Naive thymus-derived CD4-positive, alpha-beta T cell (primary cell): ENCODE measurements at regions of chr1 and their contacts with region 1.

Region 1: GRCh38 chr1:198007687-198008607 is 90.8 kb downstream of the LHX9 start:
- DNase-seq: no peak
- ATAC-seq: no peak
- H3K4me3 ChIP-seq: no peak overlapping the region
- H3K4me3 Mint-ChIP-seq: no peak overlapping the region
- H3K27ac ChIP-seq: no peak overlapping the region
- H3K27ac Mint-ChIP-seq: no peak overlapping the region
- H3K4me1 ChIP-seq: no peaks in the 10 kb centered on the region
- H3K4me1 Mint-ChIP-seq: no peaks in the 10 kb centered on the region
- H3K27me3 ChIP-seq: no peaks in the 10 kb centered on the region
- H3K27me3 Mint-ChIP-seq: peaks cover 0 to 19% (median 3%) of the 10 kb centered on the region in 5 donors

Region 2: GRCh38 chr1:198047913-198048312 is 40.0 kb after region 1 on chr1:
- CTCF ChIA-PET with region 1: no interaction called
- POLR2A ChIA-PET with region 1: no interaction called
- intact Hi-C with region 1: loop called in 1 of 2 experiments (anchors 1 kb)
- DNase-seq: peak in 5 of 9 donors; percentile 4 to 35 (median 10)
- ATAC-seq: peak; percentile 54
- H3K4me3 ChIP-seq: no peak overlapping the region
- H3K4me3 Mint-ChIP-seq: peak overlapping the region in 3 of 10 donors; percentile 1 to 51 (median 9)
- H3K27ac ChIP-seq: no peak overlapping the region
- H3K27ac Mint-ChIP-seq: peak overlapping the region in 3 of 9 donors; percentile 22 to 77 (median 62)
- H3K4me1 ChIP-seq: peaks cover 0 to 7% of the 10 kb centered on the region in 2 donors
- H3K4me1 Mint-ChIP-seq: peaks cover 5 to 18% (median 14%) of the 10 kb centered on the region in 7 donors
- H3K27me3 ChIP-seq: no peaks in the 10 kb centered on the region
- H3K27me3 Mint-ChIP-seq: peaks cover 0 to 2% (median 0%) of the 10 kb centered on the region in 5 donors